ENCODE measurements at regions of chr20 and their contacts with region 1.

Region 1: DNA sequence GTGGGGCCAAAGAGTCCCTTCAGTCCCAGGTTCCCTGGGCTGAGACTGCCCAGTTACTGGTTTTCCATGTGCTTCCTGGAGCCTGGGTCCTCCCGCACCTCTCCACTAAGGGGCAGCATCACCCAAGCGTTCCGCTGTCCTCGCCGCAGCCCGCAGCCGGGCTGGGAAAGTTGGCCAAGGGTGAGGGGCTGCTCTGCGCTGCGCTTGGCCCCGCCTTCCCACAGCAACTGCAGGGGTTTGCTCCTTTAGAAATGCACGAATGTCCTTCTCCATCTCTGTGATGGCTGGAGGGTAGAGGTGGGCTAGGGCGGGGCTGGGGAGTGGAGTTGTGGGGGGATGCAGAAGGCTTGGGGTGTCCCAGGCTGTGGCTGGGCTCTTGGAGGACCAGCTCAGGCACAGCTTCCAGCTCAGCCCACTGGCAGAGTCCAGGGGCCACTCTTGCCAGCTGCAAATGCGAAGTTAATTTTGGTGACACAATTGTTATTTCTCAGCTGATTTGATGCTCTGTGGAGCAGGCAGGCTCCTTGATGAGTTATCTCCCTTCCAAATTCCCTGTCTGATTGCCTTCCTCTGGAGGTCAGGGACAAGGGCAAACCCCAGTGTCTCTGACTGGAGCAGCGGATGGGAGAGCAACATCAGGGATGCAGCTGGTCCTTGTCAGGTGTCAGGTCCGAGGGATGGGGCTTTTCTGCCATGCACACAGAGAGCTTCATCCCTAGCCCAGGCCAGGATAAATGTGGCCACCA is 63.2 kb downstream of the NOL4L start:
- DNase-seq: peak; percentile 53
- H3K4me3 ChIP-seq: no peak overlapping the region
- H3K27ac ChIP-seq: no peak overlapping the region
- H3K4me1 ChIP-seq: peaks cover 16% of the 10 kb centered on the region
- H3K27me3 ChIP-seq: no peaks in the 10 kb centered on the region
- CTCF ChIP-seq: peak; percentile 86 to 90
- POLR2A ChIP-seq: no peak

Region 2: DNA sequence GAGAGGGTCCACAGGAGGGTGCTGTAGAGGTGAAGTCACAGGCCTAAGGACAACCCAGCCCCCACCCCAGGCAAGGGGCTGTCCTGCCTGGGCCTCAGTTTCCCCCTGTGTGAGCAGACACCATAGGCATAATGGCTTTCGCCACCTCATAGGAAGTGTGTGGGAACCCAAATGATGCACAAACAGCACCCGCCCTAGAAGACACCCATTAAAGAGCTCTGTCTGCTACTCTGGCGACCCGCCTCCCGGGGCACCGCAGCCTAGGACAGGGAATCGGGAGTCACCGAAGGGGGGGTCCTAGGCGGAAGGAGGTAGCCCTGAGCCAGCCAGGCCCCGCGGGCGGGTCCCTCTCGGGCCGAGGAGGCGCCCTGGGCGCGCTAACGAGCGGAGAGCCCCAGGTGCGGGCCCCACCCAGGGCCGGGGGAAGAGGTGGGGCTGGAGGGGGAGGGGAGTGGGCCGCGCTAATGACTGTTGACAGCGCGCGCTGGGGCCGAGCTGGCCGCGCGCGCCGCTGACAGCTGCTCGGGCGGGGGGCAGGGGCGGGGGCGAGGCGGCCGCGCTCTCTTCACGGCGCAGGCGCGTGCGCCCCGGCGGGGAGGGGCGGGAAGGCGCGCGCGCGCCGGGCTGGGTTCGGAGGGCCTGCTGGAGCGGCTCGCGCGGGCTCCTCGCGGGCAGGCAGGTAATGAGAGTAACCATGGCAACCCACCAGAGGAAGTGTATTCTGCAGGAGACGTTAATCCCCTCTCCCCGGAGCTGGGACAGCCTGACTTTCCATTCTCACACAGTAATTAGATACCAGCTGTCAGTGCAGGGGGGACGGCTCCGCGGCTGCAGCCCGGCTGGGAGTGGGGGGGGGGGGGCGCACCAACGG is 14.2 kb after region 1 on chr20:
- CTCF ChIA-PET with region 1: interaction called, 15 read pairs
- POLR2A ChIA-PET with region 1: no interaction called
- dilution Hi-C with region 1: no loop called
- intact Hi-C with region 1: no loop called
- DNase-seq: no peak
- H3K4me3 ChIP-seq: peak overlapping the region in 1 of 3 experiments; percentile 38
- H3K27ac ChIP-seq: no peak overlapping the region
- H3K4me1 ChIP-seq: peaks cover 6% of the 10 kb centered on the region
- H3K27me3 ChIP-seq: peaks cover 0 to 6% of the 10 kb centered on the region in 2 experiments
- CTCF ChIP-seq: no peak
- POLR2A ChIP-seq: no peak

Region 3: GRCh38 chr20:32642257-32643046 is 120.5 kb after region 1 on chr20:
- CTCF ChIA-PET with region 1: interaction called, 24 read pairs
- POLR2A ChIA-PET with region 1: no interaction called
- dilution Hi-C with region 1: no loop called
- intact Hi-C with region 1: no loop called
- DNase-seq: no peak
- H3K4me3 ChIP-seq: no peak overlapping the region
- H3K27ac ChIP-seq: no peak overlapping the region
- H3K4me1 ChIP-seq: no peaks in the 10 kb centered on the region
- H3K27me3 ChIP-seq: peaks cover 1 to 2% of the 10 kb centered on the region in 2 experiments
- CTCF ChIP-seq: no peak
- POLR2A ChIP-seq: no peak

Region 4: DNA sequence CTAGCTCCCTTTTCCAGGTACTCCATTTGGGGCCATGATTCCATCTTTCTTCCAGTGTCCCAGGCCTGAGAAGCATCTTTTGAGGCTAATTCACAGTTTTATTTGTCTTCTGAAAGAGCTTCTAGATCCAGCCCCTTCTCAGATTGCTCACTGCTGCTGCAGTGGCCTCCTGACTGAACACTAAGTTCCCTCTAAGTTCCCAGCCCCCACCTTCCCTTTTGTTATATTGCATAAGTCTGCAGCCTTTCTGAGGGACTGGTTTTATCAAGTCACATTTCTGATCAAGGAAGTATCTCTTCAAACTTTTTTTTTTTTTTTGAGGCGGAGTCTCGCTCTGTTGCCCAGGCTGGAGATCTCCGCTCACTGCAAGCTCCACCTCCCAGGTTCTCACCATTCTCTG is 308.5 kb after region 1 on chr20:
- CTCF ChIA-PET with region 1: no interaction called
- POLR2A ChIA-PET with region 1: no interaction called
- dilution Hi-C with region 1: no loop called
- intact Hi-C with region 1: no loop called
- DNase-seq: no peak
- H3K4me3 ChIP-seq: no peak overlapping the region
- H3K27ac ChIP-seq: no peak overlapping the region
- H3K4me1 ChIP-seq: peaks cover 18% of the 10 kb centered on the region
- H3K27me3 ChIP-seq: no peaks in the 10 kb centered on the region
- CTCF ChIP-seq: no peak
- POLR2A ChIP-seq: no peak

Measured in endothelial cell of umbilical vein (primary cell).